Posterior vena cava (tissue), 2 donors: ENCODE measurements at regions of chr1 and their contacts with region 1.

Region 1: GRCh38 chr1:164563721-164564360 is 4.9 kb downstream of the PBX1 start:
- DNase-seq: no peak

Region 2: GRCh38 chr1:163202833-163203451 is 1360.9 kb before region 1 on chr1 and contains the start of gene RGS5:
- intact Hi-C with region 1: no loop called
- DNase-seq: no peak
- total RNA-seq, gene RGS5: 176 to 297 TPM

Region 3: GRCh38 chr1:163509114-163509513 is 1054.7 kb before region 1 on chr1:
- intact Hi-C with region 1: no loop called
- DNase-seq: no peak

Region 4: DNA sequence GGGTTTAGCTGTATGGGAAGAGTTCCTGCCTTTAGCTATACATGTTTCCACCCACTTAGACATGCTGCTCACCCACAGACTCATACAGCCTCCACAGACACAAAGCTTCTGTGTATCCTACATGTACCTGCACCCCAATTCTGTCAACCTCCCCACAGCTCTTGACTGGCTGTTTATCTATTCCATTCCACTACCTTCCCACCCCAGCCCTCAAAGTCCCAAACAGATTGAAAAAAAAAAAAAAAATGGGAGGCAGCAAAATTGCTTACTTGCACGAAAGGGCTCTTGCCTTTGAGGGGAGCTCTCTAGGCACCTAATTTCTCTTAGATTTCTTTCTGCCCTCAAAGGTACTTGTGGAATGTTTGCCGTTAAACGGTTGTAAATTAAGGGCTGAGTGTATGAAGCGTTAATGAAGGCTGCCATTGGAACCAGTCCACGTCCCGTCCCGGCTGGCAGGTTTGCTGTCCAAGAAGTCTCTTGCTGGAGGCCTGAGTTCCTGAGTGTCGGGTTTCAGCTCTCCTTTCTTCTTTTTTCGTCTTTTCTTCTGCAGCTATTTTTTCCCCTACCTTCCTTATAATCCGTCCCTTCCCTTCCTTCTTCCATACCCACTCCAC is 38.7 kb after region 1 on chr1:
- intact Hi-C with region 1: loop called in 1 of 2 experiments (anchors 1 kb)
- DNase-seq: no peak

Region 5: GRCh38 chr1:164625001-164625617 is 61.3 kb after region 1 on chr1:
- intact Hi-C with region 1: no loop called
- DNase-seq: no peak

Region 6: GRCh38 chr1:164823486-164824279 is 259.8 kb after region 1 on chr1:
- intact Hi-C with region 1: no loop called
- DNase-seq: no peak